Tibial artery (tissue), 4 donors: ENCODE measurements at regions of chr1 and their contacts with region 1.

Region 1: GRCh38 chr1:28666801-28667200 is 1.8 kb upstream of the GMEB1 start:
- DNase-seq: no peak
- H3K4me3 ChIP-seq: no peak overlapping the region
- H3K27ac ChIP-seq: no peak overlapping the region
- H3K4me1 ChIP-seq: peaks cover 0 to 25% (median 7%) of the 10 kb centered on the region in 4 donors
- H3K27me3 ChIP-seq: no peaks in the 10 kb centered on the region
- CTCF ChIP-seq: no peak

Region 2: GRCh38 chr1:28648474-28649198 is 18.2 kb before region 1 on chr1 and contains the start of gene RNU11:
- intact Hi-C with region 1: loop called (anchors 2 kb)
- DNase-seq: peak; percentile 88 to 92
- H3K4me3 ChIP-seq: peak within 1 kb of the TSS; percentile 49 to 57
- H3K27ac ChIP-seq: peak within 1 kb of the TSS; percentile 88 to 89
- H3K4me1 ChIP-seq: peaks cover 0 to 25% (median 21%) of the 10 kb centered on the region in 4 donors
- H3K27me3 ChIP-seq: no peaks in the 10 kb centered on the region
- CTCF ChIP-seq: no peak